ENCODE measurements at regions of chr11 and their contacts with region 1.

Region 1: DNA sequence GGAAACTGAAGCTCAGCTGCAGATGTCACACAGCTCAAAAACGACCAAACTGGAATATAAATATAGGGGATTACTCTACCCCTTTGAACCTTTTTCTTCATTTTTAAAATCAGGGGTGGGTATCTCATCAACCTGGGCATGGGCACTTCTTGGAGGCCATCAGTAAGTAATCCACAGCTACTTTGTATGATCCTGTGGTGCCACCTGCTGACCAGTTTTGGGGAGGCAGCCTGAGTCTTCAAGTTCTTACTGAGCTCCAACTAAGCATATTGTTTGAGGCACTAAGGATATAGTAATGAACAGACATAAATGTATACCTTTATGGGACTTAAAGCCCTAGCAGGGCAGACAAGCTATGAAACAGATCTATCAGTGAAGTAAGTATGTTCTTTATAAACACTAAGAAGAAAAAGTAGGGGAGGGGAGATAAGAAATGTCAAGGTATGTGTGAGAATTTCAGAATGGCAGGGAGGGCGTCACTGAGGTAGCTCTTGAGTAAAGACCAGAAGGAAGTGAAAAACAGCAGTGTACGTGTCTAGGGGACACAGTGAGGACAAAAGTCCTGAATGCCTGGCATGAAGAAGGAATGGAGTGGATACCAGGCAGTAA is 18.4 kb downstream of the TUB start:
- DNase-seq: peak; percentile 81 to 90
- ATAC-seq: no peak
- H3K4me3 ChIP-seq: no peak overlapping the region
- H3K27ac ChIP-seq: no peak overlapping the region
- H3K4me1 ChIP-seq: no peaks in the 10 kb centered on the region
- H3K27me3 ChIP-seq: no peaks in the 10 kb centered on the region

Region 2: DNA sequence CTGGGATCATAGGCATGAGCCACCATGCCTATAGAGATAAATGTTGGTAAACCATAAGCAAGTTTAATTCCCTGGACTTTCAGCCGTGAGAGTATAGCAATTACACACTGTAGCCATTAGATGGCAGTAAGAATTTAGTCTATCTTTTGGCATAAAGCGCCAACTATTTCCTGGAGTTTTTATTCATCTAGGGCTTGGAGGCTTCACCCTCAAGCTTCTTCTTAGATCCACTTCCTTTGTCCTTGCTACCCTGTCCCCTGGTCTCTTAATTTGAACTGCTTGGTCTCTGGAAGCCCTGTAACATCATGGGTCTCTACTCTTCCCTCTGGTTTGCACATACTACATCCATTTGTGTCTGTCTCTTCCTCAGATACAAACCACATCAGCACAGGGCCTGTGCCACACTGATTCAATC is 206.5 kb before region 1 on chr11:
- intact Hi-C with region 1: loop called in 1 of 2 experiments (anchors 10 kb)
- DNase-seq: no peak
- ATAC-seq: peak; percentile 70
- H3K4me3 ChIP-seq: no peak overlapping the region
- H3K27ac ChIP-seq: peak overlapping the region in 1 of 2 donors; percentile 45
- H3K4me1 ChIP-seq: no peaks in the 10 kb centered on the region
- H3K27me3 ChIP-seq: no peaks in the 10 kb centered on the region

Region 3: DNA sequence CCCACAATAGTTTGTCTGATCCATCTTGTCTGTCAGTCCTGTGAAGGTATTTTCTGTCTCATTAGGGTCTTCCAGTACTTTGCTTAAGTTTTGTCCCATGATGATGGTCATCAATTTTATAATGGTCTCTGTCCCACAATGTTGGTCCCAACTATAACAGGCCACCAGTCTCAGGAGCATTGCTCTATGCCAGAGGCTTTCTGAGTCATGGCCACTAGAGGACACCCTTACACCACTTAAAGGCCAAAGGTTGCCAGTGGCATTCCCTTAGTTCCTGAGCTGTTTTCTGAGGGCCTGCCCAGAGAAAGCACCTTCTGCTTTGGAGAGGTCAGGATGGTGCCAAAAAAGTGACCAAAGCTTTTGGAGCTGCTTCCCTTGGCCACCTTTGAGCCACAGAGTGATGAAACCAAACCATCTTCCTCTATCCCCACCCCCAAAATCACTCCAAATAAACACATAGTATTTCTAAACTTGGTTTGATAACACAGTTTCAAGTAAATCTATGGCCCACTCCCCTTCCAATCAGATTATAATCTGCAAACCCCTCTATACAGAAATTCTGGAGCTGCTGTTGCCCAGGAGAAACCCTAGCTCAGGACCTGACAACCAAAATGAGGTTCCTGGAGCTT is 92.9 kb before region 1 on chr11:
- intact Hi-C with region 1: loop called (anchors 2 to 5 kb)
- DNase-seq: no peak
- ATAC-seq: peak; percentile 85
- H3K4me3 ChIP-seq: no peak overlapping the region
- H3K27ac ChIP-seq: no peak overlapping the region
- H3K4me1 ChIP-seq: no peaks in the 10 kb centered on the region
- H3K27me3 ChIP-seq: no peaks in the 10 kb centered on the region

Region 4: GRCh38 chr11:8011981-8012444 is 87.4 kb before region 1 on chr11:
- intact Hi-C with region 1: loop called (anchors 2 to 5 kb)
- DNase-seq: no peak
- ATAC-seq: no peak
- H3K4me3 ChIP-seq: no peak overlapping the region
- H3K27ac ChIP-seq: no peak overlapping the region
- H3K4me1 ChIP-seq: no peaks in the 10 kb centered on the region
- H3K27me3 ChIP-seq: peaks cover 0 to 2% of the 10 kb centered on the region in 2 donors

Region 5: DNA sequence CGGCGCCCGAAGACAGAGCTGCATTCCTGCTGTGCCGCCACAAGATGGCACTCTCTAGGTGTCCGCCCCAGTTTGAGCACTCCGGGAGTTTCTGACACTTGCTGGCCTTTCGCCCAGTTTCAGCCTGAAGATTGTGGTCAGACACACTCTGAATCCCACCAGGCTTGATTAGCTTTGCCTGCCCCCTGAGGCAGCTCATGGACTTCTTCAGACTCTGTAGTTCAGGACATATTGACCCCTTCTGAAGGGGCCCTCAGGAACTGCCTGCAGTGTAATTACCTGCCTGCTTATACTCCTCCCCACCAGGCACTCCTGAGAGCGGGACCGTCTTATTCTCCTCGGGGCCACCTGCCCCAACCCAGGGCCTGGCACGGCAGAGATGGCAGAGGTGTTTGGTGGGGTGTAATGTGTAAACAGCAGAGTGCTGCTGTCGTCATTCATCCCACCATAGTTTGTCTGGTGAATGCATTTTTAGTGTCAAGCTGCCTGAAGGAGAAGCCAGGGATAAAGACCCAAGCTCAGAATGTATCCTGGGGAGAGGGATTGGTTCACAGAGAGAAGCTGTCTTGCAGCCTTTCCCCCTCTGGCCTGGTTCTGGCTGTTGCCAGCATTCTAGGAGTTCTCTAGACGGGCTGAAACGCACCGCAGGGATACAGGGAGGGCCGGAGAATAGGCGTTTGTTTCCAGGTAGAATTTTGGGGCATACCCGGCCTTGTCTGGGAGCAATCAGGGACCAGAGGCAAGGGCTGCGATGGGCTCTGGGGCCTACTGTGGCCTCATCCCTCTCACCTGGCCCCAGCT is 65.9 kb before region 1 on chr11:
- intact Hi-C with region 1: loop called (anchors 2 kb)
- DNase-seq: peak; percentile 87 to 90
- ATAC-seq: peak; percentile 86
- H3K4me3 ChIP-seq: no peak overlapping the region
- H3K27ac ChIP-seq: no peak overlapping the region
- H3K4me1 ChIP-seq: no peaks in the 10 kb centered on the region
- H3K27me3 ChIP-seq: no peaks in the 10 kb centered on the region

Region 6: GRCh38 chr11:8056810-8057463 is 42.5 kb before region 1 on chr11:
- intact Hi-C with region 1: no loop called
- DNase-seq: peak in 1 of 2 donors; percentile 70
- ATAC-seq: peak; percentile 71
- H3K4me3 ChIP-seq: no peak overlapping the region
- H3K27ac ChIP-seq: no peak overlapping the region
- H3K4me1 ChIP-seq: no peaks in the 10 kb centered on the region
- H3K27me3 ChIP-seq: no peaks in the 10 kb centered on the region

Measured in aorta (tissue), 5 donors.